GM10248 (cell line): ENCODE measurements at regions of chr20 and their contacts with region 1.

Region 1: DNA sequence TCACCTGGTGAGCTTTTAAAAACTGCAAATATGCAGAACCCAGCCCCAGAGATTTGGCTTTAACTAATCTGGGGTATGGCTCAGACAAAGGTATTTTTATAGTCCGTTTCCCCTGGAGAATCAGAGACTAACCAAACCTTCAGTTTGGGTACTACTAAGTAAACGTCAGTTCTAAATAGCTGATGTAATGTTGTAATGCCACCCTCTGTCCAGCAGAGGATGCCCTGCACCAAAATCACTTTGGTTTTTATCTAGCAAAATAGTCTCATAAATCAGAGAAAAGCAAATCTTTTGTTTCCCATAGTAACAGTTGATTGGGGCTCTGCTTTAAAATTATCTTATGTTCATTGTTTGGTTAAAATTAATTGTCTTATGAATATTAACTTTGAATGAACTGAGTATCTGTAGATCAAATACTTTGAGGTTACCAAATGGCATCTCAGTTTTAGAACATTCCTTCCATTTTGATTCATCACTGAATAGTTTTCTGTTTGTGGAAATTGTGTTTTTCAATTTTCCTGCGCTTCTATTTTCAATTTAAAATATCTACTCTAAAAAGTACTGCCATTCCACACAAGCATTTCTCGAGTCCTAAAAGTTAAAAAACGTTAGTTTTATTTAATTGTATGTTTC is 278.3 kb upstream of the PLCB4 start:
- DNase-seq: peak; percentile 18
- CTCF ChIP-seq: peak; percentile 79

Region 2: GRCh38 chr20:8808202-8808535 is 17.6 kb after region 1 on chr20:
- CTCF ChIA-PET with region 1: interaction called, 15 read pairs
- POLR2A ChIA-PET with region 1: no interaction called
- DNase-seq: no peak
- CTCF ChIP-seq: no peak